ENCODE measurements at regions of chr10 and their contacts with region 1.

Region 1: GRCh38 chr10:124802313-124802675 is 675 bp downstream of the ABRAXAS2 start:
- DNase-seq: peak in 1 of 9 donors; percentile 16
- ATAC-seq: peak; percentile 28
- H3K4me3 ChIP-seq: peak overlapping the region; percentile 97
- H3K4me3 Mint-ChIP-seq: peak overlapping the region; percentile 85 to 96 (median 88)
- H3K27ac ChIP-seq: peak overlapping the region; percentile 90
- H3K27ac Mint-ChIP-seq: peak overlapping the region; percentile 55 to 95 (median 88)
- H3K4me1 ChIP-seq: peaks cover 0 to 5% of the 10 kb centered on the region in 2 donors
- H3K4me1 Mint-ChIP-seq: peaks cover 9 to 24% (median 17%) of the 10 kb centered on the region in 7 donors
- H3K27me3 ChIP-seq: no peaks in the 10 kb centered on the region
- H3K27me3 Mint-ChIP-seq: peaks cover 0 to 12% (median 4%) of the 10 kb centered on the region in 5 donors

Region 2: DNA sequence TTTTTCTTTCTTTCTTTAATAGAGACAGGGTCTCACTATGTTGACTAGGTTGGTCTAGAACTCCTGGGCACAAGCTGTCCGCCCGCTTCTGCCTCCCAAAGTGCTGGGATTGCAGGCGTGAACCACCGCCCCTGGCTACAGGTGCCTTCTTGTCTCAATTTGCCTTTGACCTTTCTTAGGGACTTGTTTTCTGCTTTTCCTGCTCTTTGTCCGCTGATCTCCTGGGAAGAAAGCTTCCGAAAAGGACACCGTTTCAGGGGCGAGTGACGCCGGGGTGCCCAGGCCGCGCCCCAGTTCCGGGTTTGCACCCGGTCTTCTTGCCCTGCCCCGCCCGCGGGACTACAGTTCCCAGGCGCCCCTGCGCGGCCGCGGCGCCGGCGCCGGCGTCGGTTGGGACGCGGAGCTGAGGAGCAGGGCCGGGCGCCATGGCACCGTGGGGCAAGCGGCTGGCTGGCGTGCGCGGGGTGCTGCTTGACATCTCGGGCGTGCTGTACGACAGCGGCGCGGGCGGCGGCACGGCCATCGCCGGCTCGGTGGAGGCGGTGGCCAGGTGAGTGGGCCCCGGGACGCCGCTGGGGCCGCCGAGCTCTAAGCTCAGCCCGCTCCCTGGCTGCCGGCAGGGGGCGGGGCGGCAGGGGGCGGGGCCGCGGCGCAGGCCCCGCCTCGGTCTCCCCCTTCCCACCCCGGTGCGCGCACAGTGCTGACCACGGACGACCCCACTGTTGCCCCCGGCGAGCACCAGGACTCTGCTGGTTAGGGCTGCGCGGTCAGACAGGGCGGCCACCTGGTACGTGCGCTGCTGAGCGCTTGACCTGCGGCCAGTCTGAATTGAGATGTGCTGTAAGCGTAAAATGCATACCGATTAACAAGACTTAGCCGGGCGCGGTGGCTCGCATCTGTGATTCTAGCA is 340.6 kb before region 1 on chr10 and contains the start of gene LHPP:
- CTCF ChIA-PET with region 1: interaction called, 3 read pairs
- POLR2A ChIA-PET with region 1: no interaction called
- intact Hi-C with region 1: loop called (anchors 1 kb)
- DNase-seq: peak; percentile 77 to 91 (median 87)
- ATAC-seq: peak; percentile 98
- H3K4me3 ChIP-seq: peak within 1 kb of the TSS; percentile 76
- H3K4me3 Mint-ChIP-seq: peak within 1 kb of the TSS; percentile 69 to 96 (median 90)
- H3K27ac ChIP-seq: peak within 1 kb of the TSS; percentile 76
- H3K27ac Mint-ChIP-seq: peak within 1 kb of the TSS; percentile 82 to 98 (median 96)
- H3K4me1 ChIP-seq: peaks cover 13 to 21% of the 10 kb centered on the region in 2 donors
- H3K4me1 Mint-ChIP-seq: peaks cover 23 to 35% (median 28%) of the 10 kb centered on the region in 7 donors
- H3K27me3 ChIP-seq: no peaks in the 10 kb centered on the region
- H3K27me3 Mint-ChIP-seq: peaks cover 0 to 17% (median 11%) of the 10 kb centered on the region in 5 donors
- total RNA-seq, gene LHPP: 19.8 to 31.2 (median 27.6) TPM

Region 3: DNA sequence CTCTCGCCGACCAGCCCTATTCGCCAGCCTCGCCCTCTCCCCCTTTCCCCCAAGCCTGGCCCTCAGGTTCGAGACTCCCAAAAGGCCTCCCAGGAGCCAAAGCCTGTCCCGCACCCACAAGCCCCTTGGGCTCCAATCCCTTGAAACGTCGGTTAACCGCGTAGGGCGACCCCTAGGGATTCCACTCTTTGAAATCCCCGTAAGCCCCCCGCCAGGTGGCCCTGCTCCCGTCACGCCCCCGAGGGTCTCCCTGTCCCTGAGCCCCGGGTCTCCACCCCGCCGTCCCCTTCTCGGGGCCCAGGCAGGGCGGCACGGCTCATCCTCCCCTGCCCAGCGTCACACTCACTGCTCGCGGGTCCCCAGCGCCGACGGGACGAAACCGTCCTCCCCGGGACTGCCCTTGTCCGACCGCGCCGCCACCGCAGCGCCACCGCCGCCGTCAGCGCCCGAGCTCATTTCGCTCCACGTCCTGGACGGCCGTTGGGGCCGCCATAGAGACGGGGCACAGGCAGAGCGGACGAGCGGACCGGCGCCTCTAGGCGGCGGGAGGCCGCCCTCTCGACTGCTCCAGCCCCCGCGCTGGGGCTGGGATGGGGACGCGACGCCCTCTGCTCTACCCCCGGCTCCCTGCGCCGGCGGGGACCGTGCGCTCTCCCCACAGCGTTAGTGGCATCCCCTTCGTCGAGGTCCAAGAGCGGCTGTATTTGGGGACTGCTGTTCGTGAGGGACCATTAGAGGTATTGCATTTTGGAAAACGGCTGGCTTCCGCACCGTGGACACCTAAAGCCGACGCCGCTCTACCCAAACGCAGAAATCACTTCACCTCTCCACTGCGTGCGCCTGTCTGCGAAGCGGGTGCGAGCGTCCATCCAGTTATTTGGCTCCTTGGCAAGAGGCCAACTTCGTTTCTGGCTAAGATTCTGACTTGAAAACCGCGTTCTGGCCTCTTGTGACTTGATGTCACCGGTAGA is 10.6 kb before region 1 on chr10 and contains the start of gene EEF1AKMT2:
- CTCF ChIA-PET with region 1: no interaction called
- POLR2A ChIA-PET with region 1: interaction called, 27 read pairs
- intact Hi-C with region 1: loop called (anchors 1 kb)
- DNase-seq: peak; percentile 68 to 88 (median 81)
- ATAC-seq: peak; percentile 99
- H3K4me3 ChIP-seq: peak within 1 kb of the TSS; percentile 92
- H3K4me3 Mint-ChIP-seq: peak within 1 kb of the TSS; percentile 90 to 100 (median 98)
- H3K27ac ChIP-seq: peak within 1 kb of the TSS; percentile 77
- H3K27ac Mint-ChIP-seq: peak within 1 kb of the TSS; percentile 89 to 96 (median 95)
- H3K4me1 ChIP-seq: peaks cover 5 to 9% of the 10 kb centered on the region in 2 donors
- H3K4me1 Mint-ChIP-seq: peaks cover 11 to 30% (median 21%) of the 10 kb centered on the region in 7 donors
- H3K27me3 ChIP-seq: no peaks in the 10 kb centered on the region
- H3K27me3 Mint-ChIP-seq: peaks cover 0 to 7% (median 0%) of the 10 kb centered on the region in 5 donors
- total RNA-seq, gene EEF1AKMT2: 11.5 to 23.0 (median 21.0) TPM

Region 4: GRCh38 chr10:125719146-125720001 is 917.1 kb after region 1 on chr10 and contains the start of gene EDRF1:
- CTCF ChIA-PET with region 1: no interaction called
- POLR2A ChIA-PET with region 1: no interaction called
- intact Hi-C with region 1: loop called (anchors 5 kb)
- DNase-seq: peak; percentile 96 to 100 (median 99)
- ATAC-seq: peak; percentile 97
- H3K4me3 ChIP-seq: peak within 1 kb of the TSS; percentile 95
- H3K4me3 Mint-ChIP-seq: peak within 1 kb of the TSS; percentile 89 to 99 (median 98)
- H3K27ac ChIP-seq: peak within 1 kb of the TSS; percentile 94
- H3K27ac Mint-ChIP-seq: peak within 1 kb of the TSS; percentile 96 to 99 (median 97)
- H3K4me1 ChIP-seq: peaks cover 20 to 24% of the 10 kb centered on the region in 2 donors
- H3K4me1 Mint-ChIP-seq: peaks cover 6 to 47% (median 39%) of the 10 kb centered on the region in 7 donors
- H3K27me3 ChIP-seq: no peaks in the 10 kb centered on the region
- H3K27me3 Mint-ChIP-seq: peaks cover 0 to 3% (median 0%) of the 10 kb centered on the region in 5 donors
- total RNA-seq, gene EDRF1: 33.8 to 64.4 (median 53.8) TPM

Region 5: GRCh38 chr10:125822878-125823662 is 1020.8 kb after region 1 on chr10 and contains the starts of genes BCCIP and UROS:
- CTCF ChIA-PET with region 1: no interaction called
- POLR2A ChIA-PET with region 1: no interaction called
- intact Hi-C with region 1: loop called in 1 of 2 experiments (anchors 5 kb)
- DNase-seq: peak; percentile 88 to 98 (median 94)
- ATAC-seq: peak; percentile 92
- H3K4me3 ChIP-seq: peak within 1 kb of the TSS; percentile 97
- H3K4me3 Mint-ChIP-seq: peak within 1 kb of the TSS in 6 of 10 donors; percentile 85 to 89 (median 87)
- H3K27ac ChIP-seq: peak within 1 kb of the TSS; percentile 76
- H3K27ac Mint-ChIP-seq: peak within 1 kb of the TSS in 8 of 9 donors; percentile 16 to 88 (median 80)
- H3K4me1 ChIP-seq: peaks cover 11 to 21% of the 10 kb centered on the region in 2 donors
- H3K4me1 Mint-ChIP-seq: peaks cover 3 to 33% (median 22%) of the 10 kb centered on the region in 7 donors
- H3K27me3 ChIP-seq: no peaks in the 10 kb centered on the region
- H3K27me3 Mint-ChIP-seq: no peaks in the 10 kb centered on the region
- total RNA-seq, gene BCCIP: 31.3 to 68.4 (median 45.8) TPM
- total RNA-seq, gene UROS: 28.9 to 53.0 (median 41.3) TPM